A673 (cell line): ENCODE measurements at regions of chr18 and their contacts with region 1.

Region 1: GRCh38 chr18:50188652-50189051 is 6.3 kb downstream of the MYO5B start:
- DNase-seq: no peak
- H3K4me3 ChIP-seq: no peak overlapping the region
- H3K27ac ChIP-seq: no peak overlapping the region
- H3K4me1 ChIP-seq: no peaks in the 10 kb centered on the region
- H3K27me3 ChIP-seq: peaks cover 70% of the 10 kb centered on the region
- CTCF ChIP-seq: no peak

Region 2: DNA sequence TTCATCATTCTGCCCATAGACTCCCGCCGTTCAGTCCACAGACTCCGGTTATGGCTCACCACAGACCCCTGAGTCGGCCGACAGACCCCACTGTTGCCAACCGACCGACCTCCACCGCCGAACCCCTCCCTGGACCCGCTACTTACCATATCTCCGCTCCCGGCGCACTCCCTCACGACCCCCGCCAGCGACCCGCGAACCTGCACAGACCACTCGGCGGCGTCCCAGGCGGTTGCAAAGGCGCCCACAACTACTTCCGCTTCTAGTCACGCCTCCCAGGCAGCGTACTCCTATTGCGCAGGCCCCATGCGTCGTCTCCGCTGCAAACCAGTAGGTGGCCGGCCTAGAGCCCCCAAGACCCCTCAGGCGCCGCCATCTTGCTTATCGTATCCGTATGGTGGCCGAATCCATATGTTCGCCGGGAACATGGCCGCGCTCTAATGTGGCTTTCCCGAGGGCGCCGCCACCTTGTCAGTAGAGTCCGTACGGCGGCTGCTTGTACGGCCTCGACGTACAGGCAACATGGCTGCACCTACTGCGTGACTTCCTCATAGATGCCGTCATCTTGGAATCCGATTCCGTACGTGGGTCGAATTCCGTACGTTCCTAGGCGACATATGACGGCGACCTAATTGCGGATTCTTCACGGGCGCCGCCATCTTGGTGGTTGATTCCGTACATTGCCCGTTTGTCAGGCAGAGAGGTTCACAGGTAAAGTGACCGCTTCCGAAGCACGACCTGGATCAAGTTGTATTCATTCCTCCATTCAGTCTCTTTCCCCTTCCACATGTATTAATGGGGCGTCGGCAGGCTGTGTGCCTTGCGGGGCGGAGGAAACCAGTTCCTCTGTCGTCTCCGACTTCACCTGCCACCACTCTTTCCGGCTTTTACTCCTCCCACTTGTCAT is 99.0 kb after region 1 on chr18 and contains the start of gene CXXC1:
- CTCF ChIA-PET with region 1: no interaction called
- POLR2A ChIA-PET with region 1: no interaction called
- intact Hi-C with region 1: no loop called
- DNase-seq: peak; percentile 100
- H3K4me3 ChIP-seq: peak within 1 kb of the TSS; percentile 86
- H3K27ac ChIP-seq: peak within 1 kb of the TSS; percentile 64
- H3K4me1 ChIP-seq: no peaks in the 10 kb centered on the region
- H3K27me3 ChIP-seq: no peaks in the 10 kb centered on the region
- CTCF ChIP-seq: peak; percentile 47
- total RNA-seq, gene CXXC1: 89.5 and 94.5 TPM in 2 replicates

Region 3: GRCh38 chr18:50315100-50315871 is 126.6 kb after region 1 on chr18:
- CTCF ChIA-PET with region 1: no interaction called
- POLR2A ChIA-PET with region 1: no interaction called
- intact Hi-C with region 1: no loop called
- DNase-seq: no peak
- H3K4me3 ChIP-seq: no peak overlapping the region
- H3K27ac ChIP-seq: no peak overlapping the region
- H3K4me1 ChIP-seq: no peaks in the 10 kb centered on the region
- H3K27me3 ChIP-seq: peaks cover 35% of the 10 kb centered on the region
- CTCF ChIP-seq: no peak

Region 4: GRCh38 chr18:50397023-50397422 is 208.4 kb after region 1 on chr18:
- CTCF ChIA-PET with region 1: no interaction called
- POLR2A ChIA-PET with region 1: interaction called, 29 read pairs
- intact Hi-C with region 1: no loop called
- DNase-seq: peak; percentile 74
- H3K4me3 ChIP-seq: no peak overlapping the region
- H3K27ac ChIP-seq: no peak overlapping the region
- H3K4me1 ChIP-seq: no peaks in the 10 kb centered on the region
- H3K27me3 ChIP-seq: no peaks in the 10 kb centered on the region
- CTCF ChIP-seq: no peak